ENCODE measurements at regions of chr19 and their contacts with region 1.

Region 1: GRCh38 chr19:32599736-32600157 is 18.8 kb downstream of the PDCD5 start:
- DNase-seq: no peak
- ATAC-seq: peak in 1 of 2 donors; percentile 49

Region 2: DNA sequence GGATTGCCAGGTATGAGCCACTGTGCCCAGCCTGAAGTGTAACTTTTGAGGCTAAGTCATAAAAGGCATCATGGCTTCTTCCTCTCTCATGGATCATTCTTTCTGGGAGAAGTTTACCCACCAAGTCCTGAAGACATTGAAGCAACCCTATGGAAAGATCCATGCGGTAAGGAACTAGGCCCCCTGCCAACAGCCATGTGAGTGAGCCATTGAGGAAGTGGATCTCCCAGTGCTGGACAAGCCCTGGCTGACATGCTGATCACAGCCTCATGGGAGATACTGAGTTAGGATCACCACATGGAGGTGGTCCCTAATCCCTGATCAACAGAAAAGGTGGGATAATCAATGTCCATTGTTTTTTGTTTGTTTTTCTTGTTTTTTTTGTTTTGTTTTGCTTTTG is 88.6 kb after region 1 on chr19:
- intact Hi-C with region 1: loop called in 1 of 2 experiments (anchors 10 kb)
- DNase-seq: peak; percentile 45
- ATAC-seq: no peak